Activated CD4-positive, alpha-beta memory T cell treated with anti-CD3 and anti-CD28 coated beads, Interleukin-2, amount 10 ng/mL, durations not matched to agents 7 days and 5 days (primary cell): ENCODE measurements at regions of chr6 and their contacts with region 1.

Region 1: DNA sequence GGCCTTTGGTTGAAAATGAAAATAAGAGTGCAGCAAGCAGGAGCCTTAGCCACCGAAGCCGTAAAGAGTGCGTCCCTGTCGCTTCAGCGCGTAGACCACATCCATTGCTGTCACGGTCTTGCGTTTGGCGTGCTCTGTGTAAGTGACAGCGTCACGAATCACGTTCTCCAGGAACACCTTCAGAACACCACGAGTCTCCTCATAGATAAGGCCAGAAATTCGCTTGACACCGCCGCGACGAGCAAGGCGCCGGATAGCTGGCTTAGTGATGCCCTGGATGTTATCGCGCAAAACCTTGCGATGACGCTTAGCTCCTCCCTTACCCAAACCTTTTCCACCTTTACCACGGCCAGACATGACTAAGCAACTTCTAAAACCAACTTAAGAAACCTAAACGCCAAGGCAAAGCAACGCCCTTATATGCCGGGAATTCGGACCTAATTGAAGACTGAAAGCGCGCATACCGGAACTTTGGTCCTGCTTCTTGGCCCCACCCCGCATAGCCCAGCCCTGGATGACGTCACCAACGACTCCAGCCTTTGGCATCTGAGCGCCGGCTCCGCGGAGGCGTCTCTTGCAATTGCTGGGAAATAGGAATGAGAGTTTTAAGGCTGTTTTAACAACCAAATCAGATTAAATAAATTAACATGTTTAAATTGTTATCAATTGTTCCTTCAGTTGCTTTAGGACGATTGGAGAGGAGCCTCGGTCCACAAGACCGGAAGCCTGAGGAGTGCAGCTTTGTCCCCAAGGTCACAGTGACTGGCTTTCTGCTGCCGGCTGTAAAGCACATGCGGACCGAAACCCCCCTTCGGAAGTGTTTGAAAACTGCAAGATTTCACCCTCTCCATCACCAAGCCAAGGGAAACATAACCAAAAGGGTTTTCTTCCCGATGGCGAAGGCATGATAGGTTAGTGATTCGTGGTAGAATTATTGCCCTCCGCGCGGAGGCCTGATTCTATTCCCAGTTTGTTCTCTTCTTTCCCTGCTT is 79.6 kb upstream of the BTN3A2 start:
- DNase-seq: peak; percentile 98
- H3K4me3 Mint-ChIP-seq: peak overlapping the region; percentile 83
- H3K27ac Mint-ChIP-seq: peak overlapping the region; percentile 96
- H3K4me1 Mint-ChIP-seq: peaks cover 39% of the 10 kb centered on the region
- H3K27me3 Mint-ChIP-seq: peaks cover 4% of the 10 kb centered on the region

Region 2: GRCh38 chr6:26031595-26032339 is 253.7 kb before region 1 on chr6:
- CTCF ChIA-PET with region 1: no interaction called
- POLR2A ChIA-PET with region 1: interaction called, 23 read pairs
- DNase-seq: peak; percentile 92
- H3K4me3 Mint-ChIP-seq: peak overlapping the region; percentile 84
- H3K27ac Mint-ChIP-seq: peak overlapping the region; percentile 100
- H3K4me1 Mint-ChIP-seq: peaks cover 74% of the 10 kb centered on the region
- H3K27me3 Mint-ChIP-seq: peaks cover 4% of the 10 kb centered on the region

Region 3: DNA sequence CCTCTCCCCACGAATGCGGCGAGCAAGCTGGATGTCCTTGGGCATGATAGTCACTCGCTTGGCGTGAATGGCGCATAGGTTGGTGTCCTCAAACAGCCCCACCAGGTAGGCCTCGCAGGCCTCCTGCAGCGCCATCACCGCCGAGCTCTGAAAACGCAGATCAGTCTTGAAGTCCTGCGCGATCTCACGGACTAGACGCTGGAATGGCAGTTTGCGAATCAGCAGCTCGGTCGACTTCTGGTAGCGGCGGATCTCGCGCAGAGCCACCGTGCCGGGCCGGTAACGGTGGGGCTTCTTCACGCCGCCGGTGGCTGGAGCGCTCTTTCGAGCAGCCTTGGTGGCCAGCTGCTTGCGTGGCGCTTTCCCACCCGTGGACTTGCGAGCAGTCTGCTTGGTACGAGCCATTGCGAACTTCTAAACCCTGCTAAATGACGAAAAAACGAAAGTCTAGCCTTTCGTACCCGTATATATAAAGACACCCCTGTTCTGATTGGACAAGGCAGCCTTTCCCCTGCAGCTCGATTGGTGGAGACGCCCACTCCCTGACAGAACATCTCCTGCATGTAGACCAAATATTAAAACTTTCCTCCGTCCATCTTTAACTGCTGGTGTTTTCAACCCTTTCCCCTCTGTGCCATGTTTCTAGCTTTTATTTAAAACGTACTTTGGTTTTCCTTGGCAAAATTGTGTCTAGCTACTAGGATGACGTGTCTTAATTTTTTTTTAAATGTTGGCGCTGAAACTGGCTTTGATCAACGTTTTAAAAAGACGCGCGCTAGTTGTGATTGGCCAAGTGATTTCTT is 88.4 kb before region 1 on chr6:
- CTCF ChIA-PET with region 1: interaction called, 9 read pairs
- POLR2A ChIA-PET with region 1: interaction called, 124 read pairs
- DNase-seq: peak; percentile 85
- H3K4me3 Mint-ChIP-seq: peak overlapping the region; percentile 93
- H3K27ac Mint-ChIP-seq: peak overlapping the region; percentile 96
- H3K4me1 Mint-ChIP-seq: peaks cover 49% of the 10 kb centered on the region
- H3K27me3 Mint-ChIP-seq: no peaks in the 10 kb centered on the region

Region 4: GRCh38 chr6:26234421-26235296 is 50.8 kb before region 1 on chr6:
- CTCF ChIA-PET with region 1: no interaction called
- POLR2A ChIA-PET with region 1: interaction called, 124 read pairs
- DNase-seq: peak; percentile 85
- H3K4me3 Mint-ChIP-seq: peak overlapping the region; percentile 76
- H3K27ac Mint-ChIP-seq: peak overlapping the region; percentile 95
- H3K4me1 Mint-ChIP-seq: peaks cover 41% of the 10 kb centered on the region
- H3K27me3 Mint-ChIP-seq: no peaks in the 10 kb centered on the region

Region 5: GRCh38 chr6:26304797-26305640 is 19.6 kb after region 1 on chr6:
- CTCF ChIA-PET with region 1: interaction called, 8 read pairs
- POLR2A ChIA-PET with region 1: interaction called, 25 read pairs
- DNase-seq: peak; percentile 67
- H3K4me3 Mint-ChIP-seq: peak overlapping the region; percentile 79
- H3K27ac Mint-ChIP-seq: peak overlapping the region; percentile 90
- H3K4me1 Mint-ChIP-seq: peaks cover 49% of the 10 kb centered on the region
- H3K27me3 Mint-ChIP-seq: no peaks in the 10 kb centered on the region

Region 6: GRCh38 chr6:26421259-26422144 is 136.1 kb after region 1 on chr6:
- CTCF ChIA-PET with region 1: no interaction called
- POLR2A ChIA-PET with region 1: no interaction called
- DNase-seq: peak; percentile 59
- H3K4me3 Mint-ChIP-seq: no peak overlapping the region
- H3K27ac Mint-ChIP-seq: peak overlapping the region; percentile 59
- H3K4me1 Mint-ChIP-seq: peaks cover 19% of the 10 kb centered on the region
- H3K27me3 Mint-ChIP-seq: no peaks in the 10 kb centered on the region

Region 7: GRCh38 chr6:26537846-26538571 is 252.6 kb after region 1 on chr6 and contains the start of gene HMGN4:
- CTCF ChIA-PET with region 1: interaction called, 4 read pairs
- POLR2A ChIA-PET with region 1: interaction called, 21 read pairs
- DNase-seq: peak; percentile 82
- H3K4me3 Mint-ChIP-seq: peak within 1 kb of the TSS; percentile 94
- H3K27ac Mint-ChIP-seq: peak within 1 kb of the TSS; percentile 98
- H3K4me1 Mint-ChIP-seq: peaks cover 63% of the 10 kb centered on the region
- H3K27me3 Mint-ChIP-seq: no peaks in the 10 kb centered on the region
- total RNA-seq, gene HMGN4: 108 to 109 TPM